Activated CD4-positive, alpha-beta memory T cell treated with anti-CD3 and anti-CD28 coated beads for 36 hours (primary cell): ENCODE measurements at regions of chr5 and their contacts with region 1.

Region 1: DNA sequence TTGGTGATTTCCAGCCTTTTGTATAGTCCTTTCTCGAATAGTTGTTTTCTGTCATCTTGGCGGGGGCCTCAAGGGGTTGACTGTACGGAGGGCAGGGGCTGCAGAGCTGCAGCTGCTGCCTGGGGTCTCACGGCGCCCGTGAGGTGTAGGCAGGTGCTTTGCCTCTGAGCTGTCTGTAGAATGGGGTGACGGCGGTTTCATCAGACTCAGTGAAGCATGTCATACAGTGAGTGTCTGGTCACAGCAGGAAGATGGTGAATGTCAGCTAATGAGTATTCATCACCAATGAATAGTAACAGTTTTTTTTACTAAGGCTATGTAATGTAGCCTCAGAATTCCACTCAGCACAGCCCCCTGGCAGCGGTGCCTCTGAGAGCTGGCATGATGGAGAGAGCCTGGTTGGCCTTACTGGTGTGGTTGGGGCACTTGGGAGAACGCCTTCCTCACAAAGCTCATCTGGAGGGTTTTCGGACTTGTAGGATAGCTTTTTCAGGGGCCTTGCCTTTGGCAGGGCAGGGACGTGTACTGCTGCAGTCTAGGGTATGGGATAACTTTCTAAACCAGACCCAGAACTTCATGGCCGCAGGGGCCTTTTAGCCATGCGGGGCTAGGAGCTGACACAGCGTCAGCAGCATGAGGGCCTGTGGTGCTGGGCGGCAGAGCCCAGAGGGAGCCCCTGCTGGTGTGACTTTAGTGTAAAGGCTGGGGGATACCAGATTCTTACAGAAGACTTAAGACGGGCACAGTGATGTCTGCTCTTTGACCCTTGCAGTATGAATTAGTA is 15.0 kb downstream of the TENT4A start:
- DNase-seq: peak; percentile 35
- H3K4me3 Mint-ChIP-seq: no peak overlapping the region
- H3K27ac Mint-ChIP-seq: peak overlapping the region; percentile 58
- H3K4me1 Mint-ChIP-seq: peaks cover 91% of the 10 kb centered on the region
- H3K27me3 Mint-ChIP-seq: no peaks in the 10 kb centered on the region

Region 2: GRCh38 chr5:6496207-6496584 is 232.0 kb before region 1 on chr5:
- CTCF ChIA-PET with region 1: no interaction called
- POLR2A ChIA-PET with region 1: no interaction called
- intact Hi-C with region 1: loop called (anchors 10 kb)
- DNase-seq: peak; percentile 53
- H3K4me3 Mint-ChIP-seq: no peak overlapping the region
- H3K27ac Mint-ChIP-seq: no peak overlapping the region
- H3K4me1 Mint-ChIP-seq: peaks cover 12% of the 10 kb centered on the region
- H3K27me3 Mint-ChIP-seq: peaks cover 20% of the 10 kb centered on the region

Region 3: GRCh38 chr5:6745706-6746222 is 17.6 kb after region 1 on chr5:
- CTCF ChIA-PET with region 1: interaction called, 11 read pairs
- POLR2A ChIA-PET with region 1: no interaction called
- intact Hi-C with region 1: no loop called
- DNase-seq: no peak
- H3K4me3 Mint-ChIP-seq: no peak overlapping the region
- H3K27ac Mint-ChIP-seq: no peak overlapping the region
- H3K4me1 Mint-ChIP-seq: peaks cover 4% of the 10 kb centered on the region
- H3K27me3 Mint-ChIP-seq: no peaks in the 10 kb centered on the region